ENCODE measurements at regions of chr3 and their contacts with region 1.

Region 1: DNA sequence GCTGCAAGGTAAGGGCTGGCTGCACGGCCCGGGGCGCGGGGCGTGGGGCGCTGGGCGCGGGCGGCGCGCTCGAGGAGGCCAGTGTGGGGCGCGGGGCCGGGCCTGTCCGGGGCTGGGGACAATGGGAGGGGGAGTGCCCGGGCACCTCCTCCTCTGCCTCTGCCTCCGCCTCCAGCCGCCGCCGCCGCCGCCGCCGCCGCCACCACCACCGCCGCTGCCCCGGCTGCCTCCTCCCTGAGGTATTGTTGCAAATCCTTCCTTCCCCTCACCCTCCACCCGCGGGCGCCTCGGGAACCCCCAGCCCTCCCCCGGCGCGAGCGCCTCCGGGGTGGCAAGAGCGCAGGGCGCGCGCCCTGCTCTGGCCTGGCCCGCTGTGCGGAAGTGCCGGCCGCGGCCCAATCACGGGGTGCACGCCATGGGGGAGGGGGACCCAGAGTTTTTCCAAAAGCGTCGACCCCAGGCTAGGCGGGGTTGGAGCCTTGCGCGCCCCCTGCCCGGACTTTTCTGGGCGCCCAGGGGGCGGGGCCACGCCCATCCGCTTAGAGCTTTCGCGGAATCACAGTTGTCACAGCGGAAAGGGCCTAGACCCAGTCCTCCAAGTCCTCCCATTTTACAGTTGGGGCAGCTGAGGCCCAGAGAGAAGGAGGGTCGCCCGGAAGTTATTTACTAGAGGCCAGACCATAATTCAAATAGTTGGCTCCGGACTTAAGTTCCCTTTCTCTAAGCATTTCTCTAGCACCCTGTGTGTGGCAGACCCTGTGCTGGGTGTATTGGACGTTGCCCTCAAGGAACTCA is at the start of gene LPP:
- DNase-seq: peak; percentile 59 to 84 (median 77)
- H3K4me3 ChIP-seq: peak within 1 kb of the TSS; percentile 70
- H3K27ac ChIP-seq: peak within 1 kb of the TSS; percentile 81 to 91
- H3K4me1 ChIP-seq: peaks cover 10% of the 10 kb centered on the region
- H3K27me3 ChIP-seq: no peaks in the 10 kb centered on the region
- CTCF ChIP-seq: peak in 1 of 3 donors; percentile 5
- EP300 ChIP-seq: no peak
- POLR2A ChIP-seq: no peak
- total RNA-seq, gene LPP: 80.6 to 280 (median 165) TPM

Region 2: DNA sequence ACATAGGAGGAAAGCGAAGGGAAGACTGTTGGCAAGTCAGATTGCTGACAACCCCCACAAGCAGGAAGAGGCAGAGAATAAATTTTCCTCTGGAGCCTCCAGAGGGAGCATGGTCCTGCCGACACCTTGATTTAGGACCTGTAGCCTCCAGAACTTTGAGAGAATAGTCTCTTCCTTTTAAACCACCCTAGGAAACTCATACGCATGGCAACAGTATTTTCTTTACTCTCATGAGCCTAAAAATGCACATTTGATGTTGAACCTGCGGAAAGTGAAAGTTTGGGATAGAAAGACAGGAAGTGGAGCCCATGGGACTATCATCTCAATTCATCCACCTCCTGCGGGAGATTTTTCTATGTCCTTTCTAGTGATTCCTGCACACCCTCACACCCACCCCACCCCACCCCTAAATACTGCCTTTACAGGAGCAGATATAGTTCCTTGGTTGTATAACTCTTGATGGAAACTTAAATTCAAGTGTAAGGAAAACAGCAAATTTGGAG is 116.9 kb before region 1 on chr3:
- intact Hi-C with region 1: no loop called
- DNase-seq: peak in 3 of 5 donors; percentile 38 to 52 (median 46)
- H3K4me3 ChIP-seq: no peak overlapping the region
- H3K27ac ChIP-seq: no peak overlapping the region
- H3K4me1 ChIP-seq: no peaks in the 10 kb centered on the region
- H3K27me3 ChIP-seq: no peaks in the 10 kb centered on the region
- CTCF ChIP-seq: peak in 2 of 3 donors; percentile 18 to 53
- EP300 ChIP-seq: no peak
- POLR2A ChIP-seq: no peak

Region 3: GRCh38 chr3:188067932-188068331 is 86.3 kb before region 1 on chr3:
- intact Hi-C with region 1: loop called in 1 of 4 experiments (anchors 5 kb)
- DNase-seq: no peak
- H3K4me3 ChIP-seq: no peak overlapping the region
- H3K27ac ChIP-seq: no peak overlapping the region
- H3K4me1 ChIP-seq: no peaks in the 10 kb centered on the region
- H3K27me3 ChIP-seq: no peaks in the 10 kb centered on the region
- CTCF ChIP-seq: no peak
- EP300 ChIP-seq: no peak
- POLR2A ChIP-seq: no peak

Region 4: GRCh38 chr3:188212308-188212969 is 58.2 kb after region 1 on chr3:
- intact Hi-C with region 1: loop called in 1 of 4 experiments (anchors 10 kb)
- DNase-seq: no peak
- H3K4me3 ChIP-seq: peak overlapping the region; percentile 33
- H3K27ac ChIP-seq: peak overlapping the region; percentile 8 to 17
- H3K4me1 ChIP-seq: peaks cover 14% of the 10 kb centered on the region
- H3K27me3 ChIP-seq: no peaks in the 10 kb centered on the region
- CTCF ChIP-seq: no peak
- EP300 ChIP-seq: no peak
- POLR2A ChIP-seq: no peak

Region 5: DNA sequence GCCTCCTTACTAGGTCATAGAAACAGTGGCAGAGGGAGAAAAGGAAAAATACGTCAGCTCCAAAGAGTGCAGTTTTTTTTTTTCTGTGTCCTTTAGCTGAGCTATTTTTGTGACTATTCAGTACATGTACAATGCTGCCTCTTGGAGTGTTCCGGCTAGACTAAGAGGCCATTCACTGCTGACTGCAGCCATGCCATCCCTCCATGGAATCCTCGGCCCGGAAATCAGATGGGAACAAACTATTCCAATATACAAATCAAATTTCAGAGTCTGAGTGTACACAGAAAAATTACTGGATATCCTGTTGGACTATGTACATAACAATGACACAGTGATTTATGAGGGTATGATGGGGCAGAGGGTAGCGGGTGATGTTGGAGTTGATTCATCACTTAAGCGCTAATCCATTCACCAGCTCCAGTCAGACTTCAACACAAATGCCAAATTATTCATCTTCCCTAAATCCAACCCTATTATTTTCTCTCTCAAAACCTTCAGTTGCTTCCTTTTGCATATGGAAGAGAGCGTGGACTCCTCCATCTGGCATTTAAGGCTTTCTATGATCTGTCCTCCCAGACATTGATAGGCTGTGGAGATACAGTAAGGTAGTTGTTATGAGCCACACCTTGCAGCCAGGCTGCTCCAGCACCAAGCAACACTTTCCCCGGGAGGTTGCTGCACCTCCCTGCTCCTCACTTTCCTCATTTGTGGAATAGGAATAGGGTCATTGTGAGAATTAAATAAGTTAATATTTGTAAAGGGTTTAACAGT is 108.9 kb after region 1 on chr3:
- intact Hi-C with region 1: loop called in 1 of 4 experiments (anchors 10 kb)
- DNase-seq: no peak
- H3K4me3 ChIP-seq: no peak overlapping the region
- H3K27ac ChIP-seq: no peak overlapping the region
- H3K4me1 ChIP-seq: peaks cover 15% of the 10 kb centered on the region
- H3K27me3 ChIP-seq: no peaks in the 10 kb centered on the region
- CTCF ChIP-seq: no peak
- EP300 ChIP-seq: no peak
- POLR2A ChIP-seq: no peak

Region 6: DNA sequence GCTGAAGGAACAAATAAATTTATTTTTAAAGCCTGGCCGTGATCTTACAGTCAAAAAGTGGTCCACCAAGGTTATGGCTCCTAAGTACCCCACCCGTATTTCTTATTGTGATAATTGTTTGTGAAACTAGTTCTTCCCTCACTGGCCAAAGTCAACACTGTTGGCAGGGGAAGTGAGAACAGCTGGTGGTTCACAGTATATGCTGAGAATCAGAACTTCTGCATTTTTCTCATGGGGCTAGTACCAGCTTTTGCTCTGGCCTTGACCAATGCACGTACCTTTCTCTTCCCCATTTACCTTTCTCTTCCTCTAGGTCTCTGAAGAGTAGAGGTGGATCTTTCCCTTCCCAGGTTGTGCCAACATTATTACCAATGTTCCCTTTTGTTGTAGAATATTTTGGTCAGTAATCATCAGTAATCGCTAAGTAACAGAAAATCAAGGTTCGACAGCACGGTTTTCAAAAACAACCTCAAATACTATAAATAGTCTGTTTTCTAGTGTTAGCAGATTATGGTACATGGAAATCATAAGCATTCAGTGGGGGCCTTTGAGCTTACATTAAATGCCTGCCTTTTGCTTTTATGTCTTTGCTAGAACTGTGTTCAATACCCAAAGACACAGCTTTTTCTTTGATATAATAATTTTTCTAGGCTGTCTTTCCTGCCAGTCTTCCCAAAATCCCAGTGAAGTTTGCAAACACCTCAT is 267.8 kb after region 1 on chr3:
- intact Hi-C with region 1: no loop called
- DNase-seq: no peak
- H3K4me3 ChIP-seq: no peak overlapping the region
- H3K27ac ChIP-seq: peak overlapping the region in 1 of 2 donors; percentile 1
- H3K4me1 ChIP-seq: peaks cover 5% of the 10 kb centered on the region
- H3K27me3 ChIP-seq: no peaks in the 10 kb centered on the region
- CTCF ChIP-seq: no peak
- EP300 ChIP-seq: no peak
- POLR2A ChIP-seq: no peak